ENCODE measurements at regions of chr5 and their contacts with region 1.

Region 1: GRCh38 chr5:142769741-142770631 is at the start of gene ARHGAP26:
- DNase-seq: peak; percentile 96
- ATAC-seq: peak; percentile 93
- H3K4me3 Mint-ChIP-seq: peak within 1 kb of the TSS; percentile 94
- H3K27ac Mint-ChIP-seq: peak within 1 kb of the TSS; percentile 89
- H3K4me1 Mint-ChIP-seq: peaks cover 36% of the 10 kb centered on the region
- H3K27me3 Mint-ChIP-seq: no peaks in the 10 kb centered on the region
- CTCF ChIP-seq: no peak
- total RNA-seq, gene ARHGAP26: 12.7 to 18.0 TPM

Region 2: DNA sequence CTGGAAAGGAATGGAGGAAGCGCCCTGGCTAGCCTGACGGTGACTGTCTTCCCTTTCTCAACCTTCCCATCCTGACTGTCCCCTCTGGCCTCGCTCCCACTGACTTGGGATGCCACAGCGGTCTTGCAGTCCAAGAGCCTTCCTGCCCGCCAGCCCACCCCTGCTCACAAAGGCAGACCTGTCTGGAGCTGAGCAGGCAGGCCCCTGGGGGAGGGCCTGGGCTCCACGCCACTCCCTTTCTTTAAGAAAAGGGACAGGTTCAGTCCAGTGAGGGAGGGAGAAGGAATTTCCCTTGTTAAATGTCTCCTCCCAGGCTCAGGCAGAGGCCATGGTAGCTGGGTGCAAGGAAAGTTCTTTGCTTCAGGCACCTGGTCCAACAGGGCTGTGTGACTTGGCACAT is 102.2 kb before region 1 on chr5:
- CTCF ChIA-PET with region 1: no interaction called
- POLR2A ChIA-PET with region 1: no interaction called
- intact Hi-C with region 1: no loop called
- DNase-seq: no peak
- ATAC-seq: no peak
- H3K4me3 Mint-ChIP-seq: no peak overlapping the region
- H3K27ac Mint-ChIP-seq: no peak overlapping the region
- H3K4me1 Mint-ChIP-seq: no peaks in the 10 kb centered on the region
- H3K27me3 Mint-ChIP-seq: no peaks in the 10 kb centered on the region
- CTCF ChIP-seq: no peak

Region 3: DNA sequence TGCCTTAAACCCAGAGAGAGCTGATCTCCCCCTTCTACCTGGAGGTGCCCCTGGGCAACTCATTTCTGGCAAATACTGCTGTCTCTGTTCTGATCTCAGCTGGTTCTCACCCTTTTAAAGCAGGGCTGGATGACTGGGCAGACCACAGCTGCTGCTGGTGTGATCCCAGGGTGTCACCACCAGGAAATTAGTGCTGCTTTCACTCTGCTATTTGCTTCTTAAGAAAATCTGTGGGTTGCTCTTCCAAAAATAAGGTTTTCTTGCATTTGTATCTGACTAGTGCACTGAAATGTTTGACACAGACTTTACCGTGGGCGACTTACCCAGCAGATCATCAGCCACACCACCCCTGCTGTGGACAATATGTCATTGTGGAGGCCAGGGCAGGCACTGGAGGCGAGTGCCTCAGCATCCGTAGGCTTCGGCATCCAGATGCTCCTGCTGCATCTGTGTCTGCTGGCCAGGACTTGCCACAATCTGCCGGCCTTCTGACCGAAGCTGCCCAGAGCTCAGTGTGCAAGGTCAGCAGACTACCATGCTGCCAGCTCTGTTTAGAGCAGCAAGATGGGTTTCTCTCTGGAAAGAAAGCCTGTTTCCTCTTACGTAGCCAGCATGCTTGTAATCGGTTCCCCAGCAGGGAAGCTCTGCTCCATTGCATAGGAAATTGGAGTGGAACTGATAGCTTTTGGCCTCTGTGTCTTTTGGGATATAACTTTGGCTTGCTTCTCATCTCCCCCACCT is 13.8 kb after region 1 on chr5:
- CTCF ChIA-PET with region 1: interaction called, 52 read pairs
- POLR2A ChIA-PET with region 1: interaction called, 62 read pairs
- intact Hi-C with region 1: no loop called
- DNase-seq: peak; percentile 90
- ATAC-seq: peak; percentile 87
- H3K4me3 Mint-ChIP-seq: peak overlapping the region; percentile 58
- H3K27ac Mint-ChIP-seq: peak overlapping the region; percentile 84
- H3K4me1 Mint-ChIP-seq: peaks cover 72% of the 10 kb centered on the region
- H3K27me3 Mint-ChIP-seq: no peaks in the 10 kb centered on the region
- CTCF ChIP-seq: no peak

Region 4: DNA sequence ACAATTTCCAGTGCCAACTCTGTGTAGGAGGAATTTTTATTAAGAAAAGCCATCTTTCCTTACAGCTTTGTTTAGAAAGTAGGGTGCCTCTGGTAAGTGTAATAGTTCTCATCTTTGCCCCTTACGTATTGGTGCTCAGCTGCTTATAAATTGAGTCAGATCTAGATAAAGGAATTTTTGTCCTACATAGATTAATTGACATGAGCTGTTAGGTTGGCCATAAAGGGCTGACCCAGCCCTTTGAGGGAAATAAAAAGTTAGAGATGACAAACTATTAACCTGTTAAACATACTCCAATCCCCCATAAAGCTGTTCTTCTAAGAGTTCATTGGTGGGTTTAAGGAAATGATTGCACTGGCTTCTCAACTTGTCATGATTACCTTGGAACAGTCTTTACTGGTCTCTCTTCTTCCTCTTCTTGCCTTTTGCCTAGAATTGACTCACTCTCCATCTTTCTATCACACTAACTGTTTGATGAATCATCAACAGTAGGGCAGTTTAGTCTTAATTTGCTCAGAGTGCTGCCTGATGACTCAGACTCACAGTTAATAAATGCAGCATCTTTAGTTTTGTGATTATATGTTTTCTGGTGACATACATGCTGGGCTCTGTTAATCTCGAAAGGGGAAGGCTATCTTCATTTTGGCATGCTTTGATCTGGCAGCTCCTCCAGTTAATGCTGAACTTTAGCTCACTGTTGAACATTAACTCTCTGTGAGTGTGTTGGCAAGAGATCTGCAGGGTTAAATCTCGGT is 51.9 kb after region 1 on chr5:
- CTCF ChIA-PET with region 1: interaction called, 31 read pairs
- POLR2A ChIA-PET with region 1: interaction called, 6 read pairs
- intact Hi-C with region 1: loop called (anchors 5 kb)
- DNase-seq: peak; percentile 37
- ATAC-seq: peak; percentile 93
- H3K4me3 Mint-ChIP-seq: no peak overlapping the region
- H3K27ac Mint-ChIP-seq: peak overlapping the region; percentile 70
- H3K4me1 Mint-ChIP-seq: peaks cover 81% of the 10 kb centered on the region
- H3K27me3 Mint-ChIP-seq: no peaks in the 10 kb centered on the region
- CTCF ChIP-seq: no peak

Region 5: DNA sequence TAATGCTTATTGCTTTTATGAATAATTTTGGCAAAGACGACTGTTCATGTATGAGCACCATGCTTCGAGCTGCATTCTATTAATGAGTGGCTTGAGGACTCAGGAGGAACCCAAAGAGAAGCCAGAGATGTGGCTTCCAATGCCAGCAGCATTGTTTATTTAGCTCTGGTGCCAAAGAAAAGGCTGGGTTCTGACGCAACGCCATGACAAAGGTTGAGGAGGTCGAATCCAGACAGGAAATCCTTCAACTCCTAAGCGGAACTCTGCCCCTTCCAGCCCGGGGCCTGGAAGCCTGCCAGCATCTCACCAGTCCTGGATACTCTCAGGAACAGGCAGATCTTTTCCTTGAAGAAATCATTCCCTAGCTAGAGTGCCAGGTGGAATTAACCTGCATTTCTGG is 104.6 kb after region 1 on chr5:
- CTCF ChIA-PET with region 1: interaction called, 30 read pairs
- POLR2A ChIA-PET with region 1: interaction called, 3 read pairs
- intact Hi-C with region 1: loop called (anchors 5 kb)
- DNase-seq: no peak
- ATAC-seq: no peak
- H3K4me3 Mint-ChIP-seq: no peak overlapping the region
- H3K27ac Mint-ChIP-seq: no peak overlapping the region
- H3K4me1 Mint-ChIP-seq: peaks cover 7% of the 10 kb centered on the region
- H3K27me3 Mint-ChIP-seq: no peaks in the 10 kb centered on the region
- CTCF ChIP-seq: no peak

Region 6: GRCh38 chr5:142888469-142889085 is 118.6 kb after region 1 on chr5:
- CTCF ChIA-PET with region 1: interaction called, 22 read pairs
- POLR2A ChIA-PET with region 1: no interaction called
- intact Hi-C with region 1: no loop called
- DNase-seq: no peak
- ATAC-seq: no peak
- H3K4me3 Mint-ChIP-seq: no peak overlapping the region
- H3K27ac Mint-ChIP-seq: no peak overlapping the region
- H3K4me1 Mint-ChIP-seq: peaks cover 8% of the 10 kb centered on the region
- H3K27me3 Mint-ChIP-seq: no peaks in the 10 kb centered on the region
- CTCF ChIP-seq: peak; percentile 93

Measured in activated CD8-positive, alpha-beta T cell treated with anti-CD3 and anti-CD28 coated beads for 36 hours (primary cell).